Dorsolateral prefrontal cortex (tissue), 120 donors: ENCODE measurements at regions of chr11 and their contacts with region 1.

Region 1: DNA sequence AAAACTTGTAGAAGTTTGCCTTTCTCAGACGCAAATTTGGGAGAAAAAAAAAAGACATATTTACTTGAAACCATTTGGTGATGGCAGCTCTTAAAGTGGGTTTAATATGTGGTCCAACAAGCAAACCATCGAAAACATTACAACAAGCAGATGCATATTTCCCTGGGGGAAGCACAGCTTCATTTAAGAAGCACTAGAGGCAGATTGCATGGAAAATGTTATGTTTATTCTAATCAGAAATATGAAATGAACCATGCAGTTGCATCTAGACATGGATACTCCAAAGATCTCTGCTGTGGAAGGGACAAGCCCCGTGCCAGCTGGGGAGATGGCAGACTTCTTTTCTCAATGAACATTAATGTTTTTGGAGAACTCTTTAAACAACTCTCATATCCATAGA is 57.4 kb upstream of the PARVA start:
- DNase-seq: no peak
- H3K4me3 ChIP-seq: no peak overlapping the region
- H3K27ac ChIP-seq: no peak overlapping the region
- H3K27me3 ChIP-seq: peaks cover 0 to 24% (median 0%) of the 10 kb centered on the region in 45 donors
- CTCF ChIP-seq: no peak

Region 2: GRCh38 chr11:12288212-12288930 is 31.6 kb before region 1 on chr11:
- intact Hi-C with region 1: loop called in 1 of 2 experiments (anchors 2 kb)
- DNase-seq: peak in 9 of 10 donors; percentile 62 to 87 (median 82)
- H3K4me3 ChIP-seq: no peak overlapping the region
- H3K27ac ChIP-seq: peak overlapping the region in 16 of 59 donors; percentile 12 to 69 (median 58)
- H3K27me3 ChIP-seq: peaks cover 0 to 11% (median 0%) of the 10 kb centered on the region in 45 donors
- CTCF ChIP-seq: peak; percentile 40 to 95 (median 88)

Region 3: GRCh38 chr11:12377824-12378593 is 58.0 kb after region 1 on chr11:
- intact Hi-C with region 1: no loop called
- DNase-seq: peak in 6 of 10 donors; percentile 35 to 58 (median 48)
- H3K4me3 ChIP-seq: peak overlapping the region; percentile 29 to 80 (median 60)
- H3K27ac ChIP-seq: peak overlapping the region in 49 of 59 donors; percentile 42 to 93 (median 82)
- H3K27me3 ChIP-seq: peaks cover 0 to 32% (median 0%) of the 10 kb centered on the region in 45 donors
- CTCF ChIP-seq: peak in 1 of 56 donors; percentile 5

Region 4: GRCh38 chr11:12430955-12431354 is 111.0 kb after region 1 on chr11:
- intact Hi-C with region 1: no loop called
- DNase-seq: no peak
- H3K4me3 ChIP-seq: no peak overlapping the region
- H3K27ac ChIP-seq: peak overlapping the region in 14 of 59 donors; percentile 3 to 58 (median 38)
- H3K27me3 ChIP-seq: no peaks in the 10 kb centered on the region
- CTCF ChIP-seq: no peak